Adrenal gland (tissue), 19 donors: ENCODE measurements at regions of chr15 and their contacts with region 1.

Region 1: GRCh38 chr15:67863442-67863987 is 23.7 kb upstream of the RNU6-1 start:
- DNase-seq: peak; percentile 75 to 88 (median 84)
- H3K4me3 ChIP-seq: peak overlapping the region in 2 of 4 donors; percentile 35 to 64
- H3K27ac ChIP-seq: peak overlapping the region in 3 of 5 donors; percentile 39 to 50 (median 42)
- H3K4me1 ChIP-seq: peaks cover 0 to 11% of the 10 kb centered on the region in 2 donors
- H3K27me3 ChIP-seq: no peaks in the 10 kb centered on the region
- CTCF ChIP-seq: peak; percentile 87 to 97 (median 94)
- POLR2A ChIP-seq: peak in 1 of 2 donors; percentile 15

Region 2: DNA sequence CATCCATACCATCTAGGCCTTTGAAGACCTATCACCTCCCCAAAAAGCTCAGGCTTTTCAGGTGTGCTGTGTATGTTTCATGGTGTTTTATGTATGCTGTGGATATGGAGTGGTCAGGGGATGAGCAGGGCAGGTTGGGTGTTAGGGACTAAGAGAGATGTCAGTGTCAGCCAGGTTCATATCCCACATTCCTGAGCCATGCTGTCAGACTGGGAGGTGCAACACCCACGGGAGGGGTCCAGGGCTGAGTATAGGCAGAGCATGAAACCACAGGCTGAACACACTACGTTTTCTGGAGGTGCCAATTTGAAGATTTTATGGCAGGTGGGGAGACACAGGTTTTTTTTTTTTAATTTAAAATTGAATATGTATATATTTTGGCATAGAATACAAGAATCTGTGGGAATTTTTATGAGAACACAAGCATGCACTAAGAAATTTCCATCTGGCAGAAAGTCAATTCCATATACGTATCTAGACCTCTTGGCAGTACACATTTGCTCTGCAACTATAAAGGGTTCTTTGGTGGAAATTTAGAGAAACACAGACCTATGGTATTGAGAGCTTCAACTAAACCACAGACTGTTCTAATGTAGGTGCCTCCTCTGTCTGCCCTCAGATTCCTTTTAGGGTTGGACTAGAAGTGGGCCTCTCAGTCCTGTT is 78.3 kb after region 1 on chr15:
- intact Hi-C with region 1: no loop called
- DNase-seq: no peak
- H3K4me3 ChIP-seq: no peak overlapping the region
- H3K27ac ChIP-seq: no peak overlapping the region
- H3K4me1 ChIP-seq: peaks cover 4 to 5% of the 10 kb centered on the region in 2 donors
- H3K27me3 ChIP-seq: no peaks in the 10 kb centered on the region
- CTCF ChIP-seq: no peak
- POLR2A ChIP-seq: no peak

Region 3: GRCh38 chr15:68053701-68054627 is 190.4 kb after region 1 on chr15 and contains the start of gene PIAS1:
- intact Hi-C with region 1: loop called (anchors 10 kb)
- DNase-seq: peak; percentile 92 to 96 (median 96)
- H3K4me3 ChIP-seq: peak within 1 kb of the TSS; percentile 97 to 100 (median 98)
- H3K27ac ChIP-seq: peak within 1 kb of the TSS; percentile 85 to 98 (median 95)
- H3K4me1 ChIP-seq: peaks cover 11 to 34% of the 10 kb centered on the region in 2 donors
- H3K27me3 ChIP-seq: no peaks in the 10 kb centered on the region
- CTCF ChIP-seq: peak in 1 of 6 experiments; percentile 17
- POLR2A ChIP-seq: peak; percentile 74 to 93
- total RNA-seq, gene PIAS1: 23.3 to 60.0 (median 39.0) TPM

Region 4: GRCh38 chr15:68154923-68155559 is 291.5 kb after region 1 on chr15:
- intact Hi-C with region 1: loop called (anchors 2 kb)
- DNase-seq: peak; percentile 37 to 75 (median 56)
- H3K4me3 ChIP-seq: no peak overlapping the region
- H3K27ac ChIP-seq: no peak overlapping the region
- H3K4me1 ChIP-seq: peaks cover 0 to 16% of the 10 kb centered on the region in 2 donors
- H3K27me3 ChIP-seq: no peaks in the 10 kb centered on the region
- CTCF ChIP-seq: peak; percentile 73 to 87 (median 79)
- POLR2A ChIP-seq: no peak

Region 5: GRCh38 chr15:68204776-68205557 is 341.5 kb after region 1 on chr15 and contains the start of gene CALML4:
- intact Hi-C with region 1: loop called (anchors 5 kb)
- DNase-seq: peak; percentile 66 to 84 (median 81)
- H3K4me3 ChIP-seq: peak within 1 kb of the TSS in 1 of 4 donors; percentile 1
- H3K27ac ChIP-seq: peak within 1 kb of the TSS in 2 of 5 donors; percentile 32 to 79
- H3K4me1 ChIP-seq: peaks cover 21 to 34% of the 10 kb centered on the region in 2 donors
- H3K27me3 ChIP-seq: no peaks in the 10 kb centered on the region
- CTCF ChIP-seq: no peak
- POLR2A ChIP-seq: peak in 1 of 2 donors; percentile 37
- total RNA-seq, gene CALML4: 3.3 to 8.4 (median 6.3) TPM